Calu3 (cell line): ENCODE measurements at regions of chr5 and their contacts with region 1.

Region 1: DNA sequence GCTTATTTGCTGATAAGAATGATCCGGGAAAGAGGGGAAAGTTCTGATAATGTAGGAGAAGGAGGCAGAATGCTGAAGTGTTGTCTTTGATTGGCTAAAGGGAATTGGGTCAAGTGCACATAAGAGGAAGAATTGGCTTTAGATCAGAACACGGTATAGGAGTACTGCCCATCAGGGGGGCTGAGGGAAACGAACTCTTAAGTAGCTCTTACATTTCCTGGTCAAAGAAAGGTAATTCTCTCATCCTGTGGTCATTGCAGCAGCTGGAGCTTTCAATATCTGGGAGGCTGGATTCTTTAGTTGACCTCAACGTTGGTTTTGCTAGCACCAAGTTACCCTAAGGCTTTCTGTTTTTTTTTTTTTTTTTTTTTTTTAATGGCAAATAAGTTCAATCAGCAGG is 178.7 kb upstream of the NR3C1 start:
- DNase-seq: no peak
- H3K4me3 Mint-ChIP-seq: no peak overlapping the region
- H3K27ac Mint-ChIP-seq: no peak overlapping the region
- H3K4me1 Mint-ChIP-seq: peaks cover 44% of the 10 kb centered on the region
- H3K27me3 Mint-ChIP-seq: no peaks in the 10 kb centered on the region
- CTCF ChIP-seq: no peak

Region 2: DNA sequence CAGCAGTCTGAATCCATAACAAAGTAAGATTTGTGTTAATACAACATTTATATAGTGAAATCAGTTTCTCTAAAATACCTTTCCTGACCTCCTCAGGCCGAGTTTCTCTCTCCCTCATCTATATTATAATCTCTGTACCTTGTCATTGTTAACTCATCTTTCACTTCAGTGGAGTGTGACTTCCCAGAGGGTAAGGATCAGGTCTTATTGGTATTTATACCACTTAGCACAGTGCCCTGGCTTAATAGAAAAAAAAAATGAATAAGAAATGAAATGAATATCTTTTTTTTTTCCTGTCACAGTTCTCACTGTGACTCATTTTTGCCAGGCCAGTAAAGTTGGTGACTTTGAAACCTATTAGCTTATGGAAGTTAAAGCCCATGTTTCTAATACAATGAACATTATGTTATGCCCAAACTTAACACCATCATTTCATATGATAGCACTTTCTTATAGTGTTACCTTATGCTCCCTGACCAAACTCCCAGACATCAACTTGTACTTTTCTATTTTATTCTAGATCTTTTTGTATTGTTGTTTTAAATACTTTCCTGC is 268.8 kb before region 1 on chr5:
- CTCF ChIA-PET with region 1: interaction called, 12 read pairs
- intact Hi-C with region 1: no loop called
- DNase-seq: no peak
- H3K4me3 Mint-ChIP-seq: no peak overlapping the region
- H3K27ac Mint-ChIP-seq: peak overlapping the region; percentile 49
- H3K4me1 Mint-ChIP-seq: peaks cover 38% of the 10 kb centered on the region
- H3K27me3 Mint-ChIP-seq: no peaks in the 10 kb centered on the region
- CTCF ChIP-seq: no peak

Region 3: GRCh38 chr5:143749581-143750205 is 167.5 kb after region 1 on chr5:
- CTCF ChIA-PET with region 1: no interaction called
- intact Hi-C with region 1: no loop called
- DNase-seq: no peak
- H3K4me3 Mint-ChIP-seq: no peak overlapping the region
- H3K27ac Mint-ChIP-seq: no peak overlapping the region
- H3K4me1 Mint-ChIP-seq: no peaks in the 10 kb centered on the region
- H3K27me3 Mint-ChIP-seq: no peaks in the 10 kb centered on the region
- CTCF ChIP-seq: no peak